ENCODE measurements at regions of chr19 and their contacts with region 1.

Region 1: GRCh38 chr19:19997656-19998268 is 41.5 kb downstream of the ZNF682 start:
- DNase-seq: peak in 4 of 5 donors; percentile 11 to 64 (median 24)
- ATAC-seq: no peak
- H3K4me3 ChIP-seq: no peak overlapping the region
- H3K27ac ChIP-seq: no peak overlapping the region
- H3K4me1 ChIP-seq: no peaks in the 10 kb centered on the region
- H3K27me3 ChIP-seq: no peaks in the 10 kb centered on the region
- CTCF ChIP-seq: peak; percentile 71 to 79 (median 75)
- POLR2A ChIP-seq: no peak

Region 2: GRCh38 chr19:19562665-19563347 is 435.0 kb before region 1 on chr19:
- intact Hi-C with region 1: no loop called
- DNase-seq: peak in 1 of 5 donors; percentile 42
- ATAC-seq: peak in 1 of 4 donors; percentile 23
- H3K4me3 ChIP-seq: no peak overlapping the region
- H3K27ac ChIP-seq: no peak overlapping the region
- H3K4me1 ChIP-seq: no peaks in the 10 kb centered on the region
- H3K27me3 ChIP-seq: no peaks in the 10 kb centered on the region
- CTCF ChIP-seq: no peak
- POLR2A ChIP-seq: no peak

Region 3: DNA sequence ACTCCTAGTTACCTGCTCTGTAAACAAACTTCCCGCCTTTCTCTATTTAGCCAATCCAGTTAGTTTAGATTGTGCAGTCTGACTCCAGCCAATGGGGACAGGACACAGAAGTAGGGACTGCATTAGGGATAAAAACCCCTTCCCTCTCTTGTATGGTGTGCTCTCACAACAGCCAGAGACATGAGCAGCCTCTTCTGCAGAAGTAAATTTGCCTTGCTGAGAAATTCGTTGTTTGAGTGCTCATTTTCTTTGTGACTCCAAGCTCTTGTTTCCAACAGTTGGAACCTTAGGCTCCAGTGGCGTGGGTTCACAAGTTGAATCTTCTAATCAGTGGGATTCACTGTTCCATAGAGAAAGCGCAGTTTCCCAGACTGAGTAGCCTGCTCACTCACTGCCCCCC is 30.9 kb before region 1 on chr19:
- intact Hi-C with region 1: no loop called
- DNase-seq: no peak
- ATAC-seq: no peak
- H3K4me3 ChIP-seq: no peak overlapping the region
- H3K27ac ChIP-seq: no peak overlapping the region
- H3K4me1 ChIP-seq: no peaks in the 10 kb centered on the region
- H3K27me3 ChIP-seq: no peaks in the 10 kb centered on the region
- CTCF ChIP-seq: no peak
- POLR2A ChIP-seq: no peak

Region 4: GRCh38 chr19:20278342-20278741 is 280.6 kb after region 1 on chr19:
- intact Hi-C with region 1: loop called in 1 of 10 experiments (anchors 2 kb)
- DNase-seq: peak in 1 of 5 donors; percentile 25
- ATAC-seq: no peak
- H3K4me3 ChIP-seq: peak overlapping the region in 1 of 12 donors; percentile 2
- H3K27ac ChIP-seq: no peak overlapping the region
- H3K4me1 ChIP-seq: peaks cover 0 to 8% (median 0%) of the 10 kb centered on the region in 12 donors
- H3K27me3 ChIP-seq: no peaks in the 10 kb centered on the region
- CTCF ChIP-seq: peak in 4 of 12 donors; percentile 27 to 79 (median 48)
- POLR2A ChIP-seq: no peak

Region 5: DNA sequence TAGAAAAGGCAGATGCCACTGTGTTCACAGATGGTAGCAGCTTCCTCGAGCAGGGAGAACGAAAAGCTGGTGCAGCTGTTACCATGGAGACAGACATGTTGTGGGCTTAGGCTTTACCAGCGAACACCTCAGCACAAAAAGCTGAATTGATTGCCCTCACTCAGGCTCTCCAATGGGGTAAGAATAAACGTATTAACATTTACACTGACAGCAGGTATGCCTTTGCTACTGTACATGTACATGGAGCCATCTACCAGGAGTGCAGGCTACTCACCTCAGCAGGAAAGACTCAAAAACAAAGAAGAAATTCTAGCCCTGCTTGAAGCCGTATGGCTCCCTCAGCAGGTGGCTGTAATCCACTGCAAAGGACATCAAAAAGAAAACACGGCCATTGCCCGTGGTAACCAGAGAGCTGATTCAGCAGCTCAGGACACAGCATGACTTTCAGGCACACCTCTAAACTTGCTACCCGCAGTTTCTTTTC is 370.1 kb after region 1 on chr19:
- intact Hi-C with region 1: loop called in 1 of 10 experiments (anchors 10 kb)
- DNase-seq: no peak
- ATAC-seq: no peak
- H3K4me3 ChIP-seq: no peak overlapping the region
- H3K27ac ChIP-seq: no peak overlapping the region
- H3K4me1 ChIP-seq: peaks cover 0 to 9% (median 0%) of the 10 kb centered on the region in 12 donors
- H3K27me3 ChIP-seq: no peaks in the 10 kb centered on the region
- CTCF ChIP-seq: no peak
- POLR2A ChIP-seq: no peak

Measured in heart left ventricle (tissue), 16 donors.